PC-3 (cell line): ENCODE measurements at regions of chr12 and their contacts with region 1.

Region 1: DNA sequence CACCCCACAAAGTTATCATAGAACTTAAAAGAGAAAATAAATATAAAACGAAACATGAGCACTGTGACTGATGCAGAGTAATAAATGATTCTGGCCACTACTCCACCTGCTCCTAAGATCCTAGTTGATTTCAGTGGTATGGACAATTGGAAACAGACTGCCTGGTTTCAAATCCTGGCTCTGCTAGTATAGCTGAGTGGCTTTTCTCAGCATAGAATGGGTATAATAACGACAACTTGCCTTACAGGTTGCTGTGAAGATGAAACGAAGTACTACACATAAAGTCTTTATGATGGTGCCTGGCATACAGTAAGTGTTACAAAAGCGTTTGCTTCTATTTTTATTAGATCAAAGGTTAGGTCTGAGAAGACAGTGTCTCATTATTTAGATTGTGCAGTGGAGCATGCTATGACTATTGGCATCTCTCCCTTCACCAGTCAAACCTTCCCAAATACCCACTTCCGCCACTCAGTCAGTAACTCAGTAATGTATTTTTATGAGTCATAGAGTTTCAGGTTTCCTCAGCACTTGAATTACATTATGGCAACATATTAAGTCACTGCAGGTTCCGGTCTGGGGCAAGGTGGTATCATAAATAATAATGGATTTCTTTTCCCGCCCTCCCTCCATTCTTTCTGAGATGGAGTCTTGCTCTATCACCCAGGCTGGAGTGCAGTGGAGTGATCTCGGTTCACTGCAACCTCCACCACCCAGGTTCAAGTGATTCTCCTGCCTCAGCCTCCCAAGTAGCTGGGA is 29.7 kb upstream of the NR2C1 start:
- DNase-seq: peak; percentile 99
- ATAC-seq: peak; percentile 70
- H3K4me3 ChIP-seq: peak overlapping the region; percentile 34
- H3K27ac ChIP-seq: peak overlapping the region; percentile 75
- H3K4me1 ChIP-seq: peaks cover 52% of the 10 kb centered on the region
- H3K27me3 ChIP-seq: no peaks in the 10 kb centered on the region
- CTCF ChIP-seq: no peak

Region 2: DNA sequence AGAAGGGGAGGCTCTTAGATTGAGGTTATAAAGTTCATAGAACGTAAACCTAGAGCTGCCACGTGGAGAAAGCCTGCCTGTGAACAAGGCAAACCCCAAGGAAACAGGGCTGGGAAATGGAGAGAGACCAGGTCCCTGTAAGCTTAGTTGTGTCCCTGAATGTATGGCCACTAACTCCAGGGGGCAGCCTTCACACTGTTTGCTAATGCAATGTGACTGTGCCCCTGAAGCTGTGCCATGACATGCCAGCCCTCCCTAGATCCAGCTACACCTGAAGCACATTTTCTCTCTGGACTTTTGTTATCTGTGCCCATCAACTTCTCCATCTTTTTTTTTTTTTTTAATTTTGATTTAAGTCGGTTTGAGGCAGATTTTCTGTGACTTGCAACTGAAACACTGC is 392.2 kb before region 1 on chr12:
- CTCF ChIA-PET with region 1: no interaction called
- POLR2A ChIA-PET with region 1: no interaction called
- intact Hi-C with region 1: no loop called
- DNase-seq: peak; percentile 33
- ATAC-seq: peak; percentile 39; the same call in 1 of the 2 replicates
- H3K4me3 ChIP-seq: no peak overlapping the region
- H3K27ac ChIP-seq: no peak overlapping the region
- H3K4me1 ChIP-seq: peaks cover 13% of the 10 kb centered on the region
- H3K27me3 ChIP-seq: no peaks in the 10 kb centered on the region
- CTCF ChIP-seq: peak; percentile 61

Region 3: GRCh38 chr12:95072900-95073697 is 30.0 kb before region 1 on chr12 and contains the start of gene NR2C1:
- CTCF ChIA-PET with region 1: no interaction called
- POLR2A ChIA-PET with region 1: interaction called, 20 read pairs
- intact Hi-C with region 1: loop called (anchors 1 kb)
- DNase-seq: peak; percentile 94
- ATAC-seq: peak; percentile 93
- H3K4me3 ChIP-seq: peak within 1 kb of the TSS; percentile 100
- H3K27ac ChIP-seq: peak within 1 kb of the TSS; percentile 46
- H3K4me1 ChIP-seq: peaks cover 6% of the 10 kb centered on the region
- H3K27me3 ChIP-seq: no peaks in the 10 kb centered on the region
- CTCF ChIP-seq: no peak
- total RNA-seq, gene NR2C1: 31.6 and 43.7 TPM in 2 replicates

Region 4: DNA sequence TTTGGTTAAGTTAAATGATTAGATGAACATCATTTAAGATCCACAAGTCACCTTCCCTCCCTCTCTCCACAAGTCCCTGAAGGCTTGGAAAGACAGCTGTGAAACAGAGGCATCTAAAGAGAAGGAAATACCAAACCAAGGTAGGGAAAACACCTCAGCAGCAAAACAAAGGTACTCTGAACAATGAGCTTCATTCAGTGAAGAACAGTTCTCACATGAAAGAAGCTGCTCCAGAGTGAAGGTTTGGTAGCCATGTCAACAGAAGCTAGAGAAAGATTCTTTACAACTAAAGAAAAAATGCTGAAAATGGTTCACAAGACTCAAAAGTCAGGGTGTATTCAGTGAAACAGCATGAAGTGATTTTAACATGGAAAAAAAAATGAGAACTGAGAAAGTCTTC is 44.8 kb after region 1 on chr12:
- CTCF ChIA-PET with region 1: no interaction called
- POLR2A ChIA-PET with region 1: no interaction called
- intact Hi-C with region 1: no loop called
- DNase-seq: no peak
- ATAC-seq: no peak
- H3K4me3 ChIP-seq: no peak overlapping the region
- H3K27ac ChIP-seq: no peak overlapping the region
- H3K4me1 ChIP-seq: no peaks in the 10 kb centered on the region
- H3K27me3 ChIP-seq: no peaks in the 10 kb centered on the region
- CTCF ChIP-seq: no peak

Region 5: DNA sequence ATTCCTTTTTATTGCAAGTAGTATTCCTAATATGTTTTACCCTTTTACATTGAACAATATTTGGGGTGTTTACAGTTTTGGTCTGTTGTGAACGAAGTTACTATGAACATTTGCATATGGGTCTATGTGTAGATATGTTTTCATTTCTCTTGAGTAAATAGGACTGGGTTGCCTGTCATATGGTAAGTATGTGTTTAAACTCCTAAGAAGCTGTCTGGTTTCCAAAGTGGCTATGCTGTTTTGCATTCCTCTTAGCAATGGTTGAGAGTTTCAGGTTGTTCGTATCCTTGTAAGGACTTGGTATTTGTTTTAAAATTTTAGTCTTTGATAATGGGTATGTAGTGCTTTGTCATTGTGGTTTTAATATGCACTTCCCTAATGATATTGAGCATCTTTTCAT is 377.1 kb after region 1 on chr12:
- CTCF ChIA-PET with region 1: no interaction called
- POLR2A ChIA-PET with region 1: no interaction called
- intact Hi-C with region 1: loop called (anchors 10 kb)
- DNase-seq: peak; percentile 29
- ATAC-seq: peak; percentile 54
- H3K4me3 ChIP-seq: no peak overlapping the region
- H3K27ac ChIP-seq: no peak overlapping the region
- H3K4me1 ChIP-seq: peaks cover 20% of the 10 kb centered on the region; the same call in 1 of the 2 replicates
- H3K27me3 ChIP-seq: no peaks in the 10 kb centered on the region
- CTCF ChIP-seq: no peak

Region 6: GRCh38 chr12:95820102-95820703 is 717.1 kb after region 1 on chr12:
- CTCF ChIA-PET with region 1: no interaction called
- POLR2A ChIA-PET with region 1: no interaction called
- intact Hi-C with region 1: no loop called
- DNase-seq: peak; percentile 88
- ATAC-seq: peak; percentile 51
- H3K4me3 ChIP-seq: no peak overlapping the region
- H3K27ac ChIP-seq: no peak overlapping the region
- H3K4me1 ChIP-seq: peaks cover 4% of the 10 kb centered on the region; the same call in 1 of the 2 replicates
- H3K27me3 ChIP-seq: no peaks in the 10 kb centered on the region
- CTCF ChIP-seq: peak; percentile 90